ENCODE measurements at regions of chr15 and their contacts with region 1.

Region 1: GRCh38 chr15:72276326-72276700 is 4.0 kb upstream of the PARP6 start:
- DNase-seq: no peak
- ATAC-seq: no peak
- H3K4me3 ChIP-seq: no peak overlapping the region
- H3K4me1 ChIP-seq: peaks cover 5% of the 10 kb centered on the region
- CTCF ChIP-seq: no peak

Region 2: DNA sequence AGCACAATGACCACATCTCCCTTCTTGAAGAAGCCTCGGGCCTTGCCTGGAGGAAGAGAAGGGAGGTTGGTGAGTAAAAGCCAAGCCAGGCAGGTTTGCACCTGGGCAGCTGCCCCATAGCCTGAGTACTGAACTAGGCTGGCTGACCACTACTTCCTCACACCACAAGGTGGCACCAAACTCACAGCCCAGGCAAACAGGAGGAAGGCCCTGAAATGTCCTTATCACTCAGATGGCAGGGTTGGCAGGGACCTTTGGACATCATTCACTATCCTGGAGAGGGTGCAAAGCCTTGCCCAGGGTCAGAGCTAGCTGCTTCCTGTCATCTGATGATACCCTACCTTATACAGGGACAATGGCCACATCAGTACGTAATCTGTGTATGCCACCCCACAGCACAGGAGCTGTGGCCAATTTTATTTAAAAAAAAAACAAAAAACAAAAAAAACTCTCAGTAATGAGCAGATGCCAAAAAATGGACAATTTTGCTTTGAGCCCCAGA is 76.6 kb before region 1 on chr15:
- intact Hi-C with region 1: loop called in 1 of 2 experiments (anchors 5 kb)
- DNase-seq: peak; percentile 74 to 91 (median 84)
- ATAC-seq: peak; percentile 91
- H3K4me3 ChIP-seq: no peak overlapping the region
- H3K4me1 ChIP-seq: peaks cover 7% of the 10 kb centered on the region
- CTCF ChIP-seq: peak; percentile 80

Measured in mucosa of descending colon (tissue), 3 donors.